Adrenal gland (tissue), 19 donors: ENCODE measurements at regions of chr16 and their contacts with region 1.

Region 1: GRCh38 chr16:31377210-31377903 is 15.8 kb upstream of the ITGAD start:
- DNase-seq: no peak
- H3K4me3 ChIP-seq: no peak overlapping the region
- H3K27ac ChIP-seq: no peak overlapping the region
- H3K4me1 ChIP-seq: no peaks in the 10 kb centered on the region
- H3K27me3 ChIP-seq: no peaks in the 10 kb centered on the region
- CTCF ChIP-seq: no peak
- POLR2A ChIP-seq: no peak

Region 2: DNA sequence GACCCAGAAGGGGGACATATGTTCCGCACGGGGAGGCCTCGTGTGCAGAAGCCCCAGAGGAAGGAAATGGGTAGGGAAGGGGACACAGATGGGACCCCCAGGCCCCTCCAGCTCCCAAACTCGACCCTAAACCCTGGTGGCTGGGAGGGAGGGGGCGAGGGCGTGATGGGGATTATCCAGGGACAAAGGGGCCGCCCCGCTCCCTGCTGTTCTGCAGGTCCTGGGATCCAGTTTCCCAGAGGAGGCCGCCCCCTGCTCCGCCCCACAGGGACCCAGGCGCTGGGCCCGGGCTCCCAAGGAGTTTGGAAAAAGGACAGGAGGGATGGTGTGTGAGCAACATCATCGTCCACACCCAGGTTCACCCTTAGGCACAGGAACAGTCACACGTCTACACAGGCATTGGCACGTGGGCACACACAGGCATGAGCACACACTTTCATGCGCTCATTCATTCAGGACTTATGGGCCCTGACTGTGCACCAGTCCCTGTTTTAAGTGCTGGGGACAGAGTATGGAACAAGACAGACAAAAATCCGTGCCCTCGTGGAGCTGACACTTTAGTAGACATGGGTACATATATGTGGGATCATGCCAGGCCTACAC is 466.8 kb before region 1 on chr16:
- intact Hi-C with region 1: no loop called
- DNase-seq: no peak
- H3K4me3 ChIP-seq: no peak overlapping the region
- H3K27ac ChIP-seq: no peak overlapping the region
- H3K4me1 ChIP-seq: no peaks in the 10 kb centered on the region
- H3K27me3 ChIP-seq: no peaks in the 10 kb centered on the region
- CTCF ChIP-seq: no peak
- POLR2A ChIP-seq: no peak

Region 3: DNA sequence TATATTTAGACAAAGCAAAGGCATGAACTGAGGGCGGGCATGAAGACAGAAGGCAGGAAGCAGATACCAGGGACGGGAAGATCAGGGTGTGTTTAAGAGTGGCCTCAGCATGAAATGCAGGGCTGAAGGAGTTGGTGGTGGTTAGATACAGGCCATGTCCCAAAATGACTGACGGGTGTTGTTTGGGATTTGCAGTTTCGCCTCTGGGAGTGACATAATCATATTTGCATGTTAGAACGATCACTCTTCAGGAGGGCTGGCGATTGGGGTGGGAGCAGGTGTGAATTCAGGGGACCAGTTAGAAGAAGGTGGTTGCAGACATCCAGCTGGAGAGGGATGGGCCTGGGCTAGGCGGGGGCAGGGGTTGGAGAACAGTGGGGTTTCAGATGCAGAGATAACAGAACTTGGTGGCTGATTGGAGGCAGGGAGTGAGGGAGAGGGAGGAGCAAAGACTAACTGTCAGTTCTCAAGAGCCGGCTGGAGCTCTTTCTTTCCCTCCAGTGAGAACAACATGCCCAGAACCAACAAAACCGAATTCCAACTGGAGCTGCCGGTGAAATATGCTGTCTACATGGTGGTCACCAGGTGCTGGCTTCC is 49.6 kb before region 1 on chr16:
- intact Hi-C with region 1: loop called in 1 of 2 experiments (anchors 5 kb)
- DNase-seq: no peak
- H3K4me3 ChIP-seq: no peak overlapping the region
- H3K27ac ChIP-seq: no peak overlapping the region
- H3K4me1 ChIP-seq: no peaks in the 10 kb centered on the region
- H3K27me3 ChIP-seq: peaks cover 25% of the 10 kb centered on the region
- CTCF ChIP-seq: no peak
- POLR2A ChIP-seq: no peak